Posterior vena cava (tissue), 2 donors: ENCODE measurements at regions of chr3 and their contacts with region 1.

Region 1: GRCh38 chr3:179322286-179323196 is at the start of gene ZNF639:
- DNase-seq: peak; percentile 94
- total RNA-seq, gene ZNF639: 31.6 to 40.9 TPM

Region 2: GRCh38 chr3:179015551-179016020 is 307.0 kb before region 1 on chr3:
- intact Hi-C with region 1: loop called in 1 of 2 experiments (anchors 5 kb)
- DNase-seq: no peak

Region 3: DNA sequence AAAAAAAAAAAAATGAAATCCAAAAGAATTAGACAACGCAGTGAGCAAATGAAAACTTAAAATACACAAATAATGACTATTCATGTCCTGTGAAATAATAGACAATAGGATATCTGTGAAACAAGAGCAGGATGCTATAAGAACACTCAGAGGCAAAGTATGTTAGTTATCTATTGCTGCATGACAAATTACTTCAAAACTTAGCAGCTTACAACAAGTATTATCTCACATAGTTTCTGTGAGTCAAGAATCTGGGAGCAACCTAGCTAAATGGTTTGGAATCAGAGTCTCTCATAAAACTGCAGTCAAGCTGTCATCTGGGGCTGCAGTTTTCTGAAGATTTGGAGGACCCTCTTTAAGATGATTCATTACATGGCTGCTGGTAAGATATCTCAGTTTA is 214.5 kb before region 1 on chr3:
- intact Hi-C with region 1: loop called in 1 of 2 experiments (anchors 5 kb)
- DNase-seq: no peak

Region 4: DNA sequence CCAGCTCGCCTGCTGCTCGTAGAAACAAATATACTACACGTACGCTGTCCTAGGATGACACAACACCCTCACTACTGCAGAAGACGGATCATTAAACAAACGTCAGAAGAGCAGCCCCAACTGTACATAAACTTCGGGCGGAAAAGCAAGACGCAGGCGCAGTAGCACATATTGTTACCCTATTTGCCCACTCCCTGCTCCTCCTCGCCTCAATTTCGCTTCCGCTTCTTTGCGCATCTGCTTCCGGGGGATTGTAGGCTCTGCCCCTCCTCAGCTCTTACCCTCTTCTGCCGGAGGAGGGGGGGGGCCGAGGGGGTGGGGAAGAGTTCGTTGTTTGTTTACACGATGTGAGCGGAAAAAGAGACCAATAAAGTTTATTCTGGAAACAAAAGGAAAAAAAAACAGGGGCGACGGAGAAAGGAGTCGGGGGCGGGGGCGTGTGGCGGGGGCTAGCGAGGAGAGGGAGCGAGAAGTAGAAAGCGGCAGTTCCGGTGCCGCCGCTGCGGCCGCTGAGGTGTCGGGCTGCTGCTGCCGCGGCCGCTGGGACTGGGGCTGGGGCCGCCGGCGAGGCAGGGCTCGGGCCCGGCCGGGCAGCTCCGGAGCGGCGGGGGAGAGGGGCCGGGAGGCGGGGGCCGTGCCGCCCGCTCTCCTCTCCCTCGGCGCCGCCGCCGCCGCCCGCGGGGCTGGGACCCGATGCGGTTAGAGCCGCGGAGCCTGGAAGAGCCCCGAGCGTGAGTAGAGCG is 174.5 kb before region 1 on chr3 and contains the start of gene PIK3CA:
- intact Hi-C with region 1: loop called in 1 of 2 experiments (anchors 5 kb)
- DNase-seq: peak; percentile 97
- total RNA-seq, gene PIK3CA: 34.9 to 46.9 TPM

Region 5: GRCh38 chr3:179562591-179563270 is 240.2 kb after region 1 on chr3 and contains the start of gene ACTL6A:
- intact Hi-C with region 1: loop called in 1 of 2 experiments (anchors 10 kb)
- DNase-seq: peak; percentile 100
- total RNA-seq, gene ACTL6A: 27.0 to 28.9 TPM